Motor neuron (in vitro differentiated cells): ENCODE measurements at regions of chr2 and their contacts with region 1.

Region 1: DNA sequence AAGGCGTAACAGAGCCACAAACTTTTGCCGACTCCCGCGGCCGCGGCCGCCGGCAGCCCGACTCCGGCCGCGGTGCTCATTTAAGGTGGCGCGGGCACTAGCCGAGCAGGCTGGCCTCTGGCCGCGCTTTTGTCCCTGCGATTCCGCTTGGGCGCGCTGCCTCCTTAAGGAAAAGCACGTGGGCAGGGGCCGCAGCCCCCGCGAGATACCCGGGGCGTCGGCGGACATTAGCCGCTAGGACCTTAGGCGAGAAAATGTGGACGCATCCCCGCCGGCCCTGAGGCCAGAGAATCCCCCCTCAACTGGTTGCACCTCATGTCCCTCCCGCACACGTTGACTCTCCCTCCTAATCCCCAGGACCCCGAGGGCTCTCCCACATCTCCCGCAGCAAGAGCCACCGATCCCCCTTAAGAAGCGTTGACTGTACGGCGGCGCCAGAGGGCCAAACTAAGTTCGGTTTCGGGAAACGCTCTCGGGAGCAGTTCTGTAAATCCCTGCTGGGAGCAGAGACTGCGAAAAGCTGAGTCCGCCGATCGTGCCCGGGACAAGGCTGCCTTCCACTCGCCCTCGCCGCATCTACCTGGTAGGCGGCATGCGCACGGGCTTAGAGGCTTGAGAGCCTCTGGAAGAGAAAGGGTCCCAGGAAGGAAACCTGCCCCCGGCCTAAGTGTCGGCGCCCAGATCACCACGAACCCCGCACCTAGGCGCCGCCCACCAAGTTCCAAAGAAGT is 1.7 kb upstream of the SATB2 start:
- ATAC-seq: peak; percentile 40 to 75 (median 68)
- H3K4me3 ChIP-seq: peak overlapping the region; percentile 60 to 97 (median 88)
- H3K27ac ChIP-seq: no peak overlapping the region
- H3K4me1 ChIP-seq: peaks cover 8 to 13% of the 10 kb centered on the region in 2 donors

Region 2: GRCh38 chr2:198930170-198930569 is 529.3 kb before region 1 on chr2:
- in situ Hi-C with region 1: loop called in 1 of 9 experiments (anchors 25 kb)
- ATAC-seq: peak in 2 of 8 experiments; percentile 26 to 36
- H3K4me3 ChIP-seq: no peak overlapping the region
- H3K27ac ChIP-seq: no peak overlapping the region
- H3K4me1 ChIP-seq: no peaks in the 10 kb centered on the region

Region 3: GRCh38 chr2:199329466-199329865 is 130.0 kb before region 1 on chr2:
- in situ Hi-C with region 1: no loop called
- ATAC-seq: peak in 2 of 8 experiments; percentile 31 to 80
- H3K4me3 ChIP-seq: no peak overlapping the region
- H3K27ac ChIP-seq: no peak overlapping the region
- H3K4me1 ChIP-seq: peaks cover 0 to 2% of the 10 kb centered on the region in 2 donors